ENCODE measurements at regions of chr1 and their contacts with region 1.

Region 1: DNA sequence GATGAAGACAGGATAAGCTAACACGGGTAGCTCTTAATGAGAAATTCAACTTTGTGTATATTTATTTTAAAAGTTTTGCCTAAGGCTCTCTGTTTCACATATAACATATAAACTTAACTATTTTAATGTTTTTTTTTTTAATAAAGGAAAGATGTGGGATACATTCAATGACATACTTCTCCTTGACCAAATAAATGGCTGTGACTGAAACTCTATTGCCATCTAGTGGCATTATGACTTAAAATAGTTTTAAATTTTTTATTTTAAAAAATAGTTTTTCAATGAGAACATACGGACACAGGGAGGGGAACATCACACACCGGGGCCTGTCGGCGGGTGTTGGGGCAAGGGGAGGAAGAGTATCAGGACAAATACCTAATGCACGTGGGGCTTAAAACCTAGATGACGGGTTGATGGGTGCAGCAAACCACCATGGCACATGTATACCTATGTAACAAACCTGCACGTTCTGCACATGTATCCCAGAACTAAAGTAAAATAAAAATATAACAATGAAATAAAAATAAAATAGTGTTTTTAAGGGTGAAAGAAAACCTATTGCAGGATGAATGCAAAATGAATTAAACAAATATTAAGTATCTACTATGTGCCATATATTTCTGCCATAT is 83.4 kb downstream of the LYST start:
- DNase-seq: no peak
- H3K4me3 ChIP-seq: no peak overlapping the region
- CTCF ChIP-seq: no peak

Region 2: GRCh38 chr1:235513495-235514366 is 269.5 kb before region 1 on chr1:
- CTCF ChIA-PET with region 1: interaction called, 116 read pairs
- POLR2A ChIA-PET with region 1: no interaction called
- DNase-seq: no peak
- H3K4me3 ChIP-seq: no peak overlapping the region
- CTCF ChIP-seq: peak; percentile 63

Region 3: DNA sequence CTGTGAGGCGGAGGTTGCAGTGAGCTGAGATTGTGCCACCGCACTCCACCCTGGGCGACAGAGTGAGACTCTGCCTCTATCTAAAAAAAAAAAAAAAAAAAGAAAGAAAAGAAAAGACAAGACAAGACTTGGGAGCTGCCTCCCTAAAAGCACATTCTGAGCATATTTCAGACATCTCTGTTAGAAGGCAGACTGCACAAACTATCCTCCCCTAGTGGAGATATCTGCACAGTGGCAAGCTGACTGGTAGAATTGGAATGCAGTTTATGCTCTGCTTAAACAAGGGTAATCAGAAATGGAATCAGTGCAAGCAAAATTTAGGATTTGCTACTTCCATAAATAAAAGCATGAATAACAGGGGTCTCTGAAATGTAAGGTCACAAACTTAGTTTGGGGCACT is 165.5 kb before region 1 on chr1:
- CTCF ChIA-PET with region 1: interaction called, 23 read pairs
- POLR2A ChIA-PET with region 1: no interaction called
- DNase-seq: peak; percentile 57
- H3K4me3 ChIP-seq: no peak overlapping the region
- CTCF ChIP-seq: peak; percentile 73

Region 4: DNA sequence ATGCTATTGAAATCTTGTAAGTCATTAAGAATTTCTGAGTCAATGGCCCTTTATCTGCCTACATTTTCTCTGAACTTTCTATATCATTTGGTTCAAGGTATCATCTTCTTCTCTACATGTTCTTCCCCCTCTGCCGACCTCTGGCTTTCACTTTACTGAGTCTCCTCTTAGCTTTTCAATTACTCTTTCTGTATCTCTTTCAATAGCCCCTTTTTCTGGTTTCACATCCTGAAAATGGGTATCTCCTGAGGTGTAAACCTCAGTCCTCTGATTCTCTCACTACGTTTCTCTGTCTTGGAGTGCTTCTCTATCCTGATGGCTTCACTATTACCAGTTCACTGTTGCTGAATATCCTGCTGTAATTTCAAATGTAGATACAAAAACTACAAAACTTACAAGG is 15.5 kb before region 1 on chr1:
- CTCF ChIA-PET with region 1: interaction called, 20 read pairs
- POLR2A ChIA-PET with region 1: no interaction called
- DNase-seq: no peak
- H3K4me3 ChIP-seq: no peak overlapping the region
- CTCF ChIP-seq: no peak

Region 5: GRCh38 chr1:235831148-235831547 is 47.9 kb after region 1 on chr1:
- CTCF ChIA-PET with region 1: no interaction called
- POLR2A ChIA-PET with region 1: no interaction called
- DNase-seq: peak; percentile 28
- H3K4me3 ChIP-seq: no peak overlapping the region
- CTCF ChIP-seq: no peak

Region 6: DNA sequence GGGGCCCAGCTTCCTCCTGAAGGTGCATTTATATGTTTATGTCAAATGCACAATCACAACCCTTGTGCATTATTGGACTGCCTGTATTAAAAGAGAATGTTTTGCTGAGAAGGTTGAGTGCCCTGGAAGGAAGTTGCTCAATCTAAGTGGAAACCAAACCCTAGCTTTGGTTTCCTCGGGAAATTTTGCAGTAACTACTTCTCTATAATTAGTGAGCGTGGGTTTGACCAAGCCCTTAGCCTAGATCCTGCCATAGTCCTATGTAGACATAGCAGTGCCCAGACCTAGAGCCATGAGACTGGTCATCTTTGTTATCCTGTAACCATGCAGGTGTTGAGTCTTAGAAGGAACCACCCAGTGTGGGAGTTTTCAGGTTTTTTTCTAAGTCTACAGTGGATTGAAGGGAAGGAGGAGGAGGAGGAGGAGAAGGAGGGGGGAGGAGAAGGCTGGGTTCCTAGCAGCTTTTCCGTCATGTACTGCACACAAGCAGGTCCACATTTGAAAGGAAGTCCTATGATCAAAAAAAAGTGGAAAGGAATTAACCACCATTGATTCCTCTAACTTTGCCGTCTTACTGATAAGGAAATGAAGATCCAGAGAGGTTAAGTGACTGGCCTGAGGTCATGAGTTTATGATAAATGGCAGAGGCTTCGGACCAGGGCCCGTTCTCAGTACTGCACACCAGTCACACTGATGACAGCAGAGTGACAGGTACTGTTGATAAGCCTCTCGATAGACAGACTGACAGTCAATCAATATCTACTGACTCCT is 155.6 kb after region 1 on chr1:
- CTCF ChIA-PET with region 1: no interaction called
- POLR2A ChIA-PET with region 1: no interaction called
- DNase-seq: no peak
- H3K4me3 ChIP-seq: no peak overlapping the region
- CTCF ChIP-seq: no peak

Region 7: DNA sequence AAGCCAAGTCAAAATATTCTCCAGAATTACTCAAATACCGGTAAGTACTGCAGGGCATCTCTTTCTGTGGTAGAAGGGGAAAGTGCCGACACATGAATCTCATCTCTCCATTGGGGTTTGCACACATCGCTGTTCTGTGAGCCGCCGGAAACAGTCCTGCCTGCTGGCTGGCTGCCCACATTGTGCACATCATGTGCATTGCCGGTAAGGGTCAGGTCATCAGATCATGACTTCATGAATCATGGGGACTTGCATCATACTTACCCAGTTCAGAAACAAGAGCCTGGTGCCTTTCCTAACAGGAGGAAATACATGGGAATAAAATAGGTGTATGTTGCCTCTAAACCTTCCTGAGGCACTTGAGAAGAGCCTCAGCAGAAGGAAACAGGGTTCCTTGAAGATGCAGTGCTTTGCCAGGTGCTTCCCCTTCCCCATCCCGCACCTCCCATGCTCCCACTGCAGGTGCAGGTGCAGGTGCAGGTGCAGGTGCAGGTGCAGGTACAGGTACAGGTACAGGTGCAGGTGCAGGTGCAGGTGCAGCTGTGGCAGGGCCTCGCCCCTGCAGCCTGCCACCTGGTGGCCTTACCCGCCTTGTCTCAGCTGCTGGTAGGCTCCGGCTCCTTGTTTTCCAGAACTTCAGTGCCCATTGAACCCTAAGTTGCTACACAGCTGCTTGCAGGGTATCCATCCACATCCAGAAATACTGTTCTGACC is 385.6 kb after region 1 on chr1:
- CTCF ChIA-PET with region 1: no interaction called
- POLR2A ChIA-PET with region 1: no interaction called
- DNase-seq: no peak
- H3K4me3 ChIP-seq: no peak overlapping the region
- CTCF ChIP-seq: no peak

Measured in AG04449 (cell line).